ENCODE measurements at regions of chr5 and their contacts with region 1.

Region 1: GRCh38 chr5:110757118-110757729 is 18.4 kb downstream of the SLC25A46 start:
- DNase-seq: no peak
- ATAC-seq: peak; percentile 52

Region 2: GRCh38 chr5:110525762-110526161 is 231.5 kb before region 1 on chr5:
- intact Hi-C with region 1: no loop called
- DNase-seq: no peak
- ATAC-seq: no peak

Region 3: GRCh38 chr5:110580625-110581024 is 176.6 kb before region 1 on chr5:
- intact Hi-C with region 1: no loop called
- DNase-seq: no peak
- ATAC-seq: no peak

Region 4: DNA sequence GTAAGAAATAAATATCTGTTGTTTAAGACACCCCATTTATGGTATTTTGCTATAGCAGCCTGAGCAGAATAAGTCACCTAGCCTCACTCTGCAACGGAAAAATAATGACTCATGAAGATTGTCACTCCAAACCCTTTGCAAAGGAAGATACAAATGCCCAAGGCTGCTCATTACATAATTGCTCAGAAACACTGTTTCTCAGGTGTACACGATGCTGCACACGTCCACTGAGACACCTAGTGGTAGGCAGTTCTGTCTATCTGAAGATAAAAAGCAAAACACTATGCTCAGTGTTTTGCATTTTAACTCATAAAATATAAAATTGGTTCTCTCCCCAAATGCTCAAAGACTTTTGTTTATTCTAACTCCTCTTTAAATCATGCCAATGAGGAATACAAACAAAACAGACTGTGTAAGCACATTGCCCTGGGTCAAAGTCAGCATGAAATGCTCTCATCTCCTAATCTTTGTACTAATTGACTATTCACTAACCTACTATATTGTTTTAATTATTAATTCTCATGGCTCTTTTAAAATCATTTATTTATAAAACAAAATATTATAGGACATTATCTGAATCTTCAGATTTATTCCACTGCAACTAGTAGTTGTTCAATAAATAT is 306.6 kb after region 1 on chr5:
- intact Hi-C with region 1: loop called (anchors 5 kb)
- DNase-seq: no peak
- ATAC-seq: peak; percentile 61

Region 5: GRCh38 chr5:111092062-111092853 is 335.0 kb after region 1 on chr5 and contains the start of gene WDR36:
- intact Hi-C with region 1: loop called (anchors 10 kb)
- DNase-seq: peak; percentile 94
- ATAC-seq: peak; percentile 99
- total RNA-seq, gene WDR36: 12.8 TPM